Mammary epithelial cell (primary cell): ENCODE measurements at regions of chr3 and their contacts with region 1.

Region 1: DNA sequence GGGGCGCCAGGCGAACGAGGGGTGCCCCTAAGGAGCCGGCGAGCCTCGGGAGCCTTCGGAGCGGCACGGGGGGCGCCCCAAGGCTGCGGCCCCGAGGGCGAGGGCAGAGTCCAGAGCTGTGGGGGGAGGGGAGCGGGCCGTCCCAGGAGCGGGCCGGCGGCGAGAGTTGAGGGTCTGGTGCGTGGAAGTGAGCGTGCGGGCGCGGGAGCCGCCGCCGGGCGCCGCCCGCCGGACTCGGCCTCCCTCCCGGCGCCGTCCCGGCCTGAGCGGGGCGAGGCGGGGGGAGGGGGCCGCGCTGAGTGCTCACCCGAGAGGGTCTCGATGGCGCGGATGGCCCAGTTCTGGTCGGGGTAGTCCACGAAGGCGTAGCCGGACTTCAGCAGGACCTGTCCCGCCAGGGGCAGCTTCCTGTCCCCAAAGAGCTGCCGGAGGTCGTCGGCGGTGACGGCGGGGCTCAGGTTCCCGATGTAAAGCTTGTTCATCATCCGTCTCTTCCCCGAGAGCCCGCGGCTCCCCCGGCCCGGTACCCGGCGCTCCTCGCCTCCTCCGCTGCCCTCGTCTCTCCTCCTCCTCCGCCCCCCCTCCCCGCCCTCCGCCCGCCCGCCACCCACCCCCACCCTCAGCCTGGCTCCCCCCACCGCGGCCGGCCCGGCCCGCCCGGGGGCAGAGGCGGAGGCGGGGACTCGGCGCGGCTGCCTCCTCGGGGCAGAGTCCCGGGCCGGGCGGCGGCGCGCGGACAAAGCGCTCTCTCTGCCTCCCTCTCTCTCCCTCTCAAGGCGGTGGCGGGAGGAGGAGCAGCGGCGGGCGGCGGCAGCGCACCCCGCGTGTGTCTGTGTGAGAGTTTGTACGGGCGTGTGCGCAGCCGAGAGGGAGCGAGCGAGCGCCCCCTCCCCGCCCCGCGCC is at the start of gene IGF2BP2:
- DNase-seq: peak; percentile 83
- H3K4me3 ChIP-seq: peak within 1 kb of the TSS; percentile 89 to 96 (median 90)
- H3K27ac ChIP-seq: peak within 1 kb of the TSS; percentile 89
- H3K4me1 ChIP-seq: peaks cover 11% of the 10 kb centered on the region
- H3K27me3 ChIP-seq: no peaks in the 10 kb centered on the region
- CTCF ChIP-seq: no peak
- total RNA-seq, gene IGF2BP2: 67.7 to 195 TPM

Region 2: DNA sequence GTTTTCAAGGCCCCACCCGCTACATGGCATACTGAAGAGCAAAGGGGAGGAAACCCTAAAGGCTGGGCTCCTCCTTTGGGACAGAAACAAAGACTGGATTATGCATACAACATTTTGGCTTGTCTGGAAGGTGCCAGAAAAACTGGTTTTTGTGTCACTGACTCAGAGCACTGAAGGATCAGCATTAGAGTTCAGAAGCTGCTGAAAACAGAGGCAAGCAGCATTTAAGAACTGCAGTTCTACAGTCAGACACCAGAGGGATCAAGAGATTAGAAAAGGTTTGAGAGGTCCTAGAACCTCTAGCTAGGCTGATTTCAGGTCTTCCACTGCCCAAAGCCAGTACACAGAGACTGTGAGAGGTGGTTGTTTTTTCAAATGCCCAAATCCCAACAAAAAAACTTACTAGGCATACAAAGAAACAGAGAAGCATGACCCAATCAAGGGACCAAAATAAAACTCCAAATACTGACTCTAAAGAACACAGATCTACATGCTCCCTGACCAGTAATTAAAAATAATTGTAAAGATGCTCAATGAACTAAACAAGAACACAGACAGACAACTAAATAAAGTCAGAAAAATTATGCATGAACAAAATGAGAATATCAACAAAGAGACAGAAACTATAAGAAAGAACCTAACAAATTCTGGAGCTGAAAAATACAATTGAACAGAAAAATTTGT is 147.4 kb before region 1 on chr3:
- CTCF ChIA-PET with region 1: no interaction called
- dilution Hi-C with region 1: no loop called
- in situ Hi-C with region 1: no loop called
- intact Hi-C with region 1: loop called (anchors 1 kb)
- DNase-seq: peak; percentile 96
- H3K4me3 ChIP-seq: no peak overlapping the region
- H3K27ac ChIP-seq: peak overlapping the region; percentile 67
- H3K4me1 ChIP-seq: peaks cover 4% of the 10 kb centered on the region
- H3K27me3 ChIP-seq: no peaks in the 10 kb centered on the region
- CTCF ChIP-seq: peak; percentile 83 to 89

Region 3: GRCh38 chr3:185744997-185745843 is 79.5 kb before region 1 on chr3:
- CTCF ChIA-PET with region 1: no interaction called
- dilution Hi-C with region 1: loop called (anchors 5 kb)
- in situ Hi-C with region 1: no loop called
- intact Hi-C with region 1: no loop called
- DNase-seq: peak; percentile 96
- H3K4me3 ChIP-seq: no peak overlapping the region
- H3K27ac ChIP-seq: peak overlapping the region; percentile 91
- H3K4me1 ChIP-seq: peaks cover 38% of the 10 kb centered on the region
- H3K27me3 ChIP-seq: no peaks in the 10 kb centered on the region
- CTCF ChIP-seq: peak in 1 of 2 donors; percentile 1

Region 4: DNA sequence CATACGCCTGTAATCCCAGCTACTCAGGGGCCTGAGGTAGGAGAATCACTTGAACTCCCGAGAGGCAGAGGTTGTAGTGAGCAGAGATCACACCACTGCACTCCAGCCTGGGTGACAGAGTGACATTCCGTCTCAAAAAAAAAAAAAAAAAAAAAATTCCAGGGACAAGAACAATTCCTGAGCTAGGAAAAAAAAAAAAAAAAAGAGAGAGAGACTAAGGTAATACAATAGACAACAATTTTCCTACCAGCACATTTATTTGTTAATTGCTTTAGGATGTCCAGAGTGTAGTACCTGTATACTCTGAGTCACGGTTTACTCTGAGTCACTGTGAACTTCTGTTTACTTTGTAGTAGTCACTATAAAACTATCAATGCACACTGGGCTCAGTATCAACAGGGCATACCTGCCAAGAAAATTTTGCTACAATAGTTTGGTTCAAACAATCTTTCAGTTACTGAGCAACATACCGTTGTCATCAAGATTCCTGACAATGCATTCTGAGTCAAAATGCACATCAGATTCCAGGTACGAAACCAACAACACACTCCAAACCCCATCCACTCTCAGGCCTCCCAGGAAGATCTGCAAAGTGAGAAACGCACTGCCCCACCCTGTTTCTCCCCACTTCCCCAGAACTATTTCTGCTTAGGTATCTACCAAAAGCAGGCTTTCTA is 28.2 kb before region 1 on chr3:
- CTCF ChIA-PET with region 1: no interaction called
- dilution Hi-C with region 1: no loop called
- in situ Hi-C with region 1: no loop called
- intact Hi-C with region 1: loop called (anchors 2 kb)
- DNase-seq: peak; percentile 98
- H3K4me3 ChIP-seq: no peak overlapping the region
- H3K27ac ChIP-seq: peak overlapping the region; percentile 99
- H3K4me1 ChIP-seq: peaks cover 33% of the 10 kb centered on the region
- H3K27me3 ChIP-seq: no peaks in the 10 kb centered on the region
- CTCF ChIP-seq: no peak

Region 5: GRCh38 chr3:185937689-185938463 is 113.1 kb after region 1 on chr3 and contains the start of gene TRA2B:
- CTCF ChIA-PET with region 1: interaction called, 3 read pairs
- dilution Hi-C with region 1: no loop called
- in situ Hi-C with region 1: no loop called
- intact Hi-C with region 1: loop called (anchors 2 kb)
- DNase-seq: peak; percentile 95
- H3K4me3 ChIP-seq: peak within 1 kb of the TSS; percentile 87 to 100 (median 98)
- H3K27ac ChIP-seq: peak within 1 kb of the TSS; percentile 99
- H3K4me1 ChIP-seq: peaks cover 18% of the 10 kb centered on the region
- H3K27me3 ChIP-seq: no peaks in the 10 kb centered on the region
- CTCF ChIP-seq: no peak
- total RNA-seq, gene TRA2B: 117 to 151 TPM

Region 6: GRCh38 chr3:186381424-186382216 is 556.9 kb after region 1 on chr3:
- CTCF ChIA-PET with region 1: no interaction called
- dilution Hi-C with region 1: no loop called
- in situ Hi-C with region 1: no loop called
- intact Hi-C with region 1: no loop called
- DNase-seq: peak; percentile 16
- H3K4me3 ChIP-seq: no peak overlapping the region
- H3K27ac ChIP-seq: no peak overlapping the region
- H3K4me1 ChIP-seq: peaks cover 17% of the 10 kb centered on the region
- H3K27me3 ChIP-seq: no peaks in the 10 kb centered on the region
- CTCF ChIP-seq: no peak

Region 7: GRCh38 chr3:186472456-186473008 is 647.8 kb after region 1 on chr3:
- CTCF ChIA-PET with region 1: no interaction called
- dilution Hi-C with region 1: no loop called
- in situ Hi-C with region 1: no loop called
- intact Hi-C with region 1: no loop called
- DNase-seq: no peak
- H3K4me3 ChIP-seq: no peak overlapping the region
- H3K27ac ChIP-seq: no peak overlapping the region
- H3K4me1 ChIP-seq: peaks cover 20% of the 10 kb centered on the region
- H3K27me3 ChIP-seq: peaks cover 2% of the 10 kb centered on the region
- CTCF ChIP-seq: no peak